HepG2 (cell line): ENCODE measurements at regions of chr3 and their contacts with region 1.

Region 1: DNA sequence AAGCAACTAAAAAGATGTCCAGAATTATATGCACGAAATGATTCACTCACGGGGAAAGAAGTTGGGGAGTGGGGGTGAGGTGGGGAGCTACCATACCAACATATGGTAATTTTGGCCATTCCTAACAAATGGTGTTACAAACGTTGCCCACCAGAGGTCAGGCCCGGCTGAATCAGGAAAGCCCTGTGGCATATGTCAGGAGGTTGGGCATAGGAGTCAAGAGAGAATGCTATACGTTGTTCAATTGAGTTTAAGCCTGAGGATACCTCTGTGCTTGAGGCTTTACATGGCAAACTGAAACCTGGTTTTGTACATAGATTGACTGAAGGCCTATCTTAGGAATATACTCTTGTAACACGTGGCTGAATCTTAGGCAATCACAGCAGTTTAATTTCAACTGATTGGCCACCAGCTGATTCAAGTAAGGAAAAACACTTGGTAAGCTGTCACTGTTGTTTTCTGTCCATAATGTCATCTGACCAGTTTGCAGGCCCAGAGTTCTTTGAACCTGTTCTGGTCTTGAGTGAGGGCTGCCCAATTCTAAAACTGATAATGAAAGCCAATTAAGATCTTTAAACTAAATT is 23.4 kb upstream of the SLC2A2 start:
- DNase-seq: peak; percentile 71
- ATAC-seq: peak; percentile 54
- H3K4me3 ChIP-seq: no peak overlapping the region
- H3K27ac ChIP-seq: no peak overlapping the region
- H3K4me1 ChIP-seq: peaks cover 71% of the 10 kb centered on the region
- H3K27me3 ChIP-seq: no peaks in the 10 kb centered on the region
- CTCF ChIP-seq: peak; percentile 81
- EP300 ChIP-seq: no peak
- POLR2A ChIP-seq: no peak
- RAD21 ChIP-seq: peak; percentile 70

Region 2: GRCh38 chr3:171001957-171002694 is 47.8 kb before region 1 on chr3:
- CTCF ChIA-PET with region 1: no interaction called
- POLR2A ChIA-PET with region 1: interaction called, 5 read pairs
- in situ Hi-C with region 1: no loop called
- intact Hi-C with region 1: loop called (anchors 1 kb)
- DNase-seq: peak; percentile 100
- ATAC-seq: peak; percentile 92
- H3K4me3 ChIP-seq: peak overlapping the region in 1 of 3 experiments; percentile 19; a peak in 1 of 6 replicates
- H3K27ac ChIP-seq: peak overlapping the region; percentile 87
- H3K4me1 ChIP-seq: peaks cover 88% of the 10 kb centered on the region
- H3K27me3 ChIP-seq: no peaks in the 10 kb centered on the region
- CTCF ChIP-seq: no peak; the same call in 1 of the 2 replicates
- EP300 ChIP-seq: peak; percentile 82 to 98
- POLR2A ChIP-seq: no peak
- RAD21 ChIP-seq: peak; percentile 40; the same call in 1 of the 2 replicates

Region 3: GRCh38 chr3:171157286-171157685 is 107.3 kb after region 1 on chr3:
- CTCF ChIA-PET with region 1: no interaction called
- POLR2A ChIA-PET with region 1: interaction called, 5 read pairs
- in situ Hi-C with region 1: no loop called
- intact Hi-C with region 1: loop called (anchors 1 kb)
- DNase-seq: peak; percentile 86
- ATAC-seq: peak; percentile 97
- H3K4me3 ChIP-seq: peak overlapping the region; percentile 10 to 60 (median 43); a peak in 4 of 6 replicates
- H3K27ac ChIP-seq: no peak overlapping the region
- H3K4me1 ChIP-seq: peaks cover 34% of the 10 kb centered on the region
- H3K27me3 ChIP-seq: no peaks in the 10 kb centered on the region
- CTCF ChIP-seq: peak; percentile 68
- EP300 ChIP-seq: peak in 1 of 2 experiments; percentile 85; a peak in 1 of 4 replicates
- POLR2A ChIP-seq: no peak
- RAD21 ChIP-seq: peak; percentile 54

Region 4: DNA sequence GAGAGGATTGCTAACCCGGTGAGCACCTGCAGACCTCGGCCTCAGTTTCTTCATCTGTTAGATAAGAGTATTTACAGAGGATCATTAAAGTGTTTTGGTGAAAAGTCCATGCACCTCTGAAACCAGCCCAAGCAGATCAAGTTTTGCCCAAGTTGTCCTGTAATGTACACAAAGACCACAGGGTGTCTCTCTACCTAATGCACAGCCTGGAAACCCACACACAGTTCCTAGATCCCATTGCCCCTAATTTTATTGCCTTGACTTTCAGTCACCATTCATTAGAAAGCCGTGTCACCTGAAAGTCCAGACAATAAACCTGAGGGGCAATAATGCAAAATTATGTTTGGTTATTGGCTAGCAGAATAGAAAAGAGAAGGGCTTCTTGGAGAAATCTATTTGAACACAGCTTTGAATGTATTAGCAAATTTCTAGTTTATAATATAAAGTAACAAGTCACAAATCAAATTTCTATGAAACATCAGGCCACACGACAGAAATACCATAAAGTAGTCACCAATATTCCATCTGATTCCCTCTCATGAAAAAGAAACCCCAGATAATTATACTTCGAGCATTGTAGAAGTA is 137.8 kb after region 1 on chr3:
- CTCF ChIA-PET with region 1: interaction called, 7 read pairs
- POLR2A ChIA-PET with region 1: no interaction called
- in situ Hi-C with region 1: no loop called
- intact Hi-C with region 1: loop called (anchors 1 kb)
- DNase-seq: peak; percentile 47
- ATAC-seq: peak; percentile 90
- H3K4me3 ChIP-seq: no peak overlapping the region
- H3K27ac ChIP-seq: no peak overlapping the region
- H3K4me1 ChIP-seq: peaks cover 21% of the 10 kb centered on the region
- H3K27me3 ChIP-seq: no peaks in the 10 kb centered on the region
- CTCF ChIP-seq: peak; percentile 78
- EP300 ChIP-seq: no peak
- POLR2A ChIP-seq: no peak
- RAD21 ChIP-seq: 0 out of 2 replicates have a peak, but pooled peaks have one; percentile 17